ENCODE measurements at regions of chr11 and their contacts with region 1.

Region 1: GRCh38 chr11:47186076-47186936 is at the start of gene PACSIN3:
- DNase-seq: peak in 1 of 2 experiments; percentile 81
- H3K4me3 ChIP-seq: peak within 1 kb of the TSS; percentile 62 to 92 (median 82)
- H3K27ac ChIP-seq: peak within 1 kb of the TSS; percentile 81
- H3K4me1 ChIP-seq: peaks cover 0 to 8% (median 6%) of the 10 kb centered on the region in 4 experiments; a peak in 5 of 7 replicates
- H3K27me3 ChIP-seq: peaks cover 0 to 6% (median 0%) of the 10 kb centered on the region in 4 experiments; a peak in 3 of 7 replicates
- CTCF ChIP-seq: no peak
- EP300 ChIP-seq: no peak
- POLR2A ChIP-seq: peak in 1 of 2 experiments; percentile 91; a peak in 2 of 3 replicates
- RAD21 ChIP-seq: no peak
- total RNA-seq, gene PACSIN3: 47.2 and 59.3 TPM in 2 replicates

Region 2: DNA sequence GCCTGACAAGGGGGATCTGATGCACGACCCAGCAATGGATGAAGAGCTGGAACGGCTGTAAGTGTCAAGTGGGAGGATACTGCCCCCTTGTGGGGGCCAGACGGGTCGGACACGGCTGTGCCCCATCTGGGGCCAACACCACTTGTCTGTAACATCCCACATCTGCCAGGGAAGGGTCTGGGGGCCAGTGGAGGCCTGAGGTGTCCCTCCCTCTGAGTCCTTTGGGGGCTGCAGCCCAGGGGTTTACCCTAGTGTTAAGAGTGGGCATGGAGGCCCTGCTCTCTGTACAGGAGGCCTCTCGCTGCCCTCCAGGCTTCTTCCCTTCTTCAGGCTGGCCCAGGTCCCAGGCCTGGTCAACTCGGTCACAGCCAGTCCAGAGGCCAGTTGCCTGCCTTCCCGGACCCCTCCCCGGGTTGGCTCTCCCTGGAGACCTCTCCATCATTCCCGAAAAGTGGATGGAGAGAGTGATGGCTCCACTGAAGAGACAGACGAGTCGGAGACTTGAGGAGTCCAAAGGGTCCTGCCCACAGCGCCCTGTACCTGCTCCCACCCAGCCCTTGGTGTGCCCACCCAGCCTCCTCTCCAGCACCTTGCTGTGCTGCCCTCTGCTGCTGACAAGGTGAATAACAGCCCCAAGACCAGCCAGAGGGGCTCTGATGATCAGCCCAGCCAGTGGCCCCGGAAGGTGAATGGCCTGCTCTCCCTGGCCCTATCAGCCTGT is 25.0 kb before region 1 on chr11:
- CTCF ChIA-PET with region 1: interaction called, 5 read pairs
- POLR2A ChIA-PET with region 1: interaction called, 10 read pairs
- DNase-seq: peak in 1 of 2 experiments; percentile 90
- H3K4me3 ChIP-seq: no peak overlapping the region
- H3K27ac ChIP-seq: no peak overlapping the region
- H3K4me1 ChIP-seq: no peaks in the 10 kb centered on the region
- H3K27me3 ChIP-seq: no peaks in the 10 kb centered on the region
- CTCF ChIP-seq: peak; percentile 91 to 96 (median 91)
- EP300 ChIP-seq: no peak
- POLR2A ChIP-seq: no peak; a peak in 1 of 3 replicates
- RAD21 ChIP-seq: peak; percentile 88 to 93

Region 3: DNA sequence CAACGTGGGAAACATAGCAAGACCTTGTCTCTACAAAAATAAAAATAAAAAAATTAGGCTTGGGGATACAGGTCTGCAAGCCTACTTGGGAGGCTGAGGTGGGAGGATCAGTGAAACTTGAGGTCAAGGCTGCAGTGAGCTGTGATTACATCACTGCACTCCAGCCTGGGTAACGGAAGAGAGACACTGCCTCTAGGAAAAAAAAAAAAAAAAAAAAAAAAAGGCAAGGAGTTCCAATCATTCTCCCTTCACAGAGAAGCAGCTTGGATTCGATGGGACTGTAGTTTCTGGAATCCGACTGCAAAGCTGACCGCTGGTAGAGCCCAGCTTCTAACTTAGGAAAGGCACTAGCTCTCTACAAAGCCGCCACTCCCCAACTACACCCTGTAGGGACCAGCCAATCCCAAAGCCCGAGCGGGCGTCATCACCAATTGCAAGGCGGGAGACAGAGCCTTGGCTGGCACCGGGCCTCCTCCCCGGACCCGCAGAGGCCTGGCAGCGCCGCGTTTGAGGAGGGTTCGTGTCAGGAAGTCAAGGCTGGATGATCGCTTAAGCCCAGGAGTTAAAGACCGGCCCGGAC is 27.8 kb after region 1 on chr11:
- CTCF ChIA-PET with region 1: interaction called, 247 read pairs
- POLR2A ChIA-PET with region 1: interaction called, 49 read pairs
- DNase-seq: peak; percentile 69 to 88
- H3K4me3 ChIP-seq: peak overlapping the region; percentile 65 to 98 (median 75)
- H3K27ac ChIP-seq: peak overlapping the region; percentile 86
- H3K4me1 ChIP-seq: peaks cover 0 to 10% (median 8%) of the 10 kb centered on the region in 4 experiments; a peak in 6 of 7 replicates
- H3K27me3 ChIP-seq: no peaks in the 10 kb centered on the region
- CTCF ChIP-seq: no peak
- EP300 ChIP-seq: no peak
- POLR2A ChIP-seq: peak; percentile 75
- RAD21 ChIP-seq: no peak

Region 4: DNA sequence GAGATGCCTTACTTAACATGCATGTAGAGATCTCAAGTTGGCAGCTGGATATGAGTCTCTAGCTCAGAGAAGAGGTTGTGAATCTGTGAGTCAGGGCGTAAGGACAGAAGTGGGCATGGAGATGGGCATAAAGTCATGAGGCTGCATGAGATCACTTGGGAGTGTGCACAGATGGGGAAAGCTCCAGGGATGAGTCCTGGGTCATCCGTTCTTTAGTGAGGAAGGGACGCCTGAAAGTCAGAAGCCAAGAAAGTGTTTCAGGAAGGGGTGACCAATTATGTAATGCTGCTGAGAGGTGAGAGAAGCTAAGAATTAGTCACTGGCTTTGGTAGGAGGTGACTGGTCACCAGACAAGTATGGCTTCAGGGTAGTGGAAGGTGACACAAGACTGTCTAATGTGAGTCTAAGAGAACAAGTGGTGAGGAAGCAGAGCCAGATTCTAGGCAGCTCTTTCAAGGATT is 55.6 kb after region 1 on chr11:
- CTCF ChIA-PET with region 1: interaction called, 88 read pairs
- POLR2A ChIA-PET with region 1: interaction called, 12 read pairs
- DNase-seq: no peak
- H3K4me3 ChIP-seq: no peak overlapping the region
- H3K27ac ChIP-seq: no peak overlapping the region
- H3K4me1 ChIP-seq: no peaks in the 10 kb centered on the region
- H3K27me3 ChIP-seq: no peaks in the 10 kb centered on the region
- CTCF ChIP-seq: no peak
- EP300 ChIP-seq: no peak
- POLR2A ChIP-seq: peak in 1 of 2 experiments; percentile 49; a peak in 2 of 3 replicates
- RAD21 ChIP-seq: no peak

Region 5: DNA sequence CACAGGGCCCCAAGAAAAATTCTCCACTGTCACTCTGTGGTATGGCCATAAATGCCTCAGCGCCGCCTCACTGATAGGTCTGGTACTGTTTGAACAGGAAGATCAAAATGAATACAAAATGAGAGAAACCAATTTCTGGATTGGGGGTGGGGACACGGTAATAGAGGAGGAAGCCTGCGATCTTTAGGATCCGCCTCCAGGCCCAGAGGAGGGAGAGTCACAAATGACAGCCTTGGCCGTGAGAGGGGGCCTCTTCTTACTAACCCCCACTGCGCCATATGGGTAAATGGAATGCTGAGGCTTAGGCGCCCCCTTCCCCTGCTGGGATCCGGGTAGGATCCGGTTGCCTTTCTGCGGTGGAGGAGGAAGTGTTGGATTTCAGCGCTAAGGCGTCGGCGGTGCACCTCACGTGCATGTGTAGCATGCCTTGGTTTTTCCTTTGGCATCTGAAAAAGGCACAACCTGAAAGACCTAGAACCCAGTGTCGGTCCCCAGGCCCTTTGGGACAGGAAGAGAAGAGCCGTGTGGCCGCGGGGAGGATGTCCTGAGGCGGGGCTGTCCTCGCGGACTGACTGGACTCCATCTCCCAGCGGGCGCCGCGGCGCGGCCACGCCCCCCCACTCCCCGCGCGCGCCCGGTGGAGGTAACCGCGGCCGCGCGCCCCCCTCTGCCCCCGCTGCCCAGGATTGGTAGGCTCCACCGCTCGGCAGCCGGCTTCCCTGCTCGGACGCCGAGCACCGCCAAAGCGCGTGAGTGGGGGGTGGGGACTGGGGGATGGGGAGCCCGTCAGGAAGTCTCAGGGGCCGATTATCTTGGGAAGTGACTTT is 82.9 kb after region 1 on chr11:
- CTCF ChIA-PET with region 1: interaction called, 4 read pairs
- POLR2A ChIA-PET with region 1: interaction called, 12 read pairs
- DNase-seq: peak in 1 of 2 experiments; percentile 90
- H3K4me3 ChIP-seq: peak overlapping the region; percentile 75 to 93 (median 81)
- H3K27ac ChIP-seq: peak overlapping the region; percentile 65; the same call in 1 of the 2 replicates
- H3K4me1 ChIP-seq: peaks cover 14 to 25% (median 17%) of the 10 kb centered on the region in 4 experiments
- H3K27me3 ChIP-seq: no peaks in the 10 kb centered on the region
- CTCF ChIP-seq: no peak; a peak in 1 of 4 replicates
- EP300 ChIP-seq: peak in 1 of 2 experiments; percentile 79; a peak in 1 of 3 replicates
- POLR2A ChIP-seq: no peak; a peak in 1 of 3 replicates
- RAD21 ChIP-seq: no peak

Region 6: GRCh38 chr11:47305734-47306483 is 119.6 kb after region 1 on chr11:
- CTCF ChIA-PET with region 1: no interaction called
- POLR2A ChIA-PET with region 1: no interaction called
- DNase-seq: no peak
- H3K4me3 ChIP-seq: no peak overlapping the region
- H3K27ac ChIP-seq: no peak overlapping the region
- H3K4me1 ChIP-seq: no peaks in the 10 kb centered on the region
- H3K27me3 ChIP-seq: no peaks in the 10 kb centered on the region
- CTCF ChIP-seq: no peak
- EP300 ChIP-seq: no peak
- POLR2A ChIP-seq: no peak
- RAD21 ChIP-seq: no peak

Measured in H1 (cell line).